MCF 10A (cell line): ENCODE measurements at regions of chr7 and their contacts with region 1.

Region 1: GRCh38 chr7:104923010-104923421 is 91.0 kb upstream of the KMT2E start:
- DNase-seq: peak; percentile 90
- H3K4me3 Mint-ChIP-seq: no peak overlapping the region
- H3K27ac Mint-ChIP-seq: no peak overlapping the region
- H3K4me1 Mint-ChIP-seq: no peaks in the 10 kb centered on the region
- H3K27me3 Mint-ChIP-seq: peaks cover 5% of the 10 kb centered on the region
- CTCF ChIP-seq: peak; percentile 89

Region 2: GRCh38 chr7:103447073-103447951 is 1475.7 kb before region 1 on chr7:
- CTCF ChIA-PET with region 1: interaction called, 3 read pairs
- POLR2A ChIA-PET with region 1: no interaction called
- intact Hi-C with region 1: loop called (anchors 5 kb)
- DNase-seq: peak; percentile 65
- H3K4me3 Mint-ChIP-seq: no peak overlapping the region
- H3K27ac Mint-ChIP-seq: no peak overlapping the region
- H3K4me1 Mint-ChIP-seq: no peaks in the 10 kb centered on the region
- H3K27me3 Mint-ChIP-seq: peaks cover 81% of the 10 kb centered on the region
- CTCF ChIP-seq: peak; percentile 65

Region 3: GRCh38 chr7:103752997-103753396 is 1170.0 kb before region 1 on chr7:
- CTCF ChIA-PET with region 1: no interaction called
- POLR2A ChIA-PET with region 1: no interaction called
- intact Hi-C with region 1: no loop called
- DNase-seq: no peak
- H3K4me3 Mint-ChIP-seq: no peak overlapping the region
- H3K27ac Mint-ChIP-seq: no peak overlapping the region
- H3K4me1 Mint-ChIP-seq: no peaks in the 10 kb centered on the region
- H3K27me3 Mint-ChIP-seq: peaks cover 28% of the 10 kb centered on the region
- CTCF ChIP-seq: peak; percentile 21

Region 4: DNA sequence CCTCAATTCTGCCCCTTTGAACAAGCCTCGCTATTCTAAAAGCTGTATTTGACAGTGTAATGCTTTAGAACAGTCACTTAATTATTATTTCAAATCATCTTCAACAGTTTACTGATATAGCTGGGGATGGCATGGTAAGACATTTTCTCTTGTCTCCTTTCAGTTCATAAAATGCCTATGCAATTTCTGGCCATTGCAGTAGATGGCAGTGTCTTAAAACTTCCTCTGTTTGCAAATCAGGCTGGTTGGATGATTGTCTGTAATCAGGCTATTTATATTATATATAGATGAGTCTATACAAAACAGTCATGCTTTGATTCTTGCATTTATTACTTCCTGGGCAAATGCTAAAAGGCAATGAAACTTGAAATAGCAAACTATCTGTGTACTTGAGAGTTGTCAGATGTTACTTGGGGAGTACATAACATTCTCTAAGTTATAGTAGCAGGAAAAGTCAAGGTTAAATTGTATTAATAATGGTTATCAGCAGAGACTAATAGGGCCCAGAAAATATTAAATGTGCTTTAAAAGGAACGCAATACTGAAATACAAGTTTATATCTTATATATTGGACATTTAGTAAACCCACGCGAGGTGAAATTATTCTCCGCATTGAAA is 650.1 kb before region 1 on chr7:
- CTCF ChIA-PET with region 1: interaction called, 12 read pairs
- POLR2A ChIA-PET with region 1: interaction called, 3 read pairs
- intact Hi-C with region 1: loop called (anchors 5 kb)
- DNase-seq: peak; percentile 50
- H3K4me3 Mint-ChIP-seq: no peak overlapping the region
- H3K27ac Mint-ChIP-seq: no peak overlapping the region
- H3K4me1 Mint-ChIP-seq: no peaks in the 10 kb centered on the region
- H3K27me3 Mint-ChIP-seq: peaks cover 50% of the 10 kb centered on the region
- CTCF ChIP-seq: peak; percentile 41

Region 5: GRCh38 chr7:104873346-104873849 is 49.6 kb before region 1 on chr7:
- CTCF ChIA-PET with region 1: no interaction called
- POLR2A ChIA-PET with region 1: no interaction called
- intact Hi-C with region 1: no loop called
- DNase-seq: no peak
- H3K4me3 Mint-ChIP-seq: no peak overlapping the region
- H3K27ac Mint-ChIP-seq: no peak overlapping the region
- H3K4me1 Mint-ChIP-seq: no peaks in the 10 kb centered on the region
- H3K27me3 Mint-ChIP-seq: peaks cover 18% of the 10 kb centered on the region
- CTCF ChIP-seq: no peak

Region 6: DNA sequence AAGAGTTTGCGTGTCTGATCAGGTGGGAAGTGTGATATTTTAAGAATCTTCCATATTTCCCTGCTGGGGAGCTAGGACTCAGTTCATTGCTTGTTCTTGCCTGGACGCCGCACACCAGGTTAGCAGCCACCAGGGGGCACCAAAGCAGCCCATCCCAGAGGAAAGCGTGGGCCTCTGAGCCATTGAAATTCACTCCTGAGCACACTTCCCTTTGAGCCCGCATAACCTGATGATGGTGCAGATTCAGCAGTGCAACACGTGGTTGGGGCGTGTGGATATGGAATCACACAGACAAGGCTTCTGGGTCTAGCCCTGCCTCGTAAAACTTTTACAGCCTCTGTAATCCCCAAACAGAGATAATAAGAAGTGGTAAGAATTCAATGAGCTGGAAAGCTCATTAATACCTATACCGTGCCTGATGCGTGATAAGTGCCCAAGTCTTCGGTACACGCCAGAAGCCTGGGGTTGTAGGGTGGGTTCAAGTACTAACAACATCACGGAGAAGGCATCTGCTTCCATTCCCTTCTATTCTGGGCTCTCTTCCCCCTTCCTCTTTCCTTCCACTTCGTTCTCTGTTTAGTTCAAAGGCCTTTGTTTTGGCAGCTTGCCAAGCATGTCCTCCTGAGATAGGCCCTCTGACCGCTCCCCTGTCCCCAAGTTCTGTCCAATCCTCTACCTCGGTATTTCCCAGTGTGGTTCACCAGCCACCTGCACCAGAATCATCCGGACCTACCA is 39.1 kb before region 1 on chr7:
- CTCF ChIA-PET with region 1: interaction called, 64 read pairs
- POLR2A ChIA-PET with region 1: interaction called, 4 read pairs
- intact Hi-C with region 1: loop called (anchors 1 kb)
- DNase-seq: peak; percentile 86
- H3K4me3 Mint-ChIP-seq: no peak overlapping the region
- H3K27ac Mint-ChIP-seq: no peak overlapping the region
- H3K4me1 Mint-ChIP-seq: no peaks in the 10 kb centered on the region
- H3K27me3 Mint-ChIP-seq: peaks cover 2% of the 10 kb centered on the region
- CTCF ChIP-seq: peak; percentile 86

Region 7: GRCh38 chr7:104983578-104984539 is 60.8 kb after region 1 on chr7:
- CTCF ChIA-PET with region 1: interaction called, 63 read pairs
- POLR2A ChIA-PET with region 1: interaction called, 5 read pairs
- intact Hi-C with region 1: loop called (anchors 1 kb)
- DNase-seq: peak; percentile 91
- H3K4me3 Mint-ChIP-seq: peak overlapping the region; percentile 94
- H3K27ac Mint-ChIP-seq: peak overlapping the region; percentile 100
- H3K4me1 Mint-ChIP-seq: peaks cover 25% of the 10 kb centered on the region
- H3K27me3 Mint-ChIP-seq: no peaks in the 10 kb centered on the region
- CTCF ChIP-seq: peak; percentile 45

Region 8: GRCh38 chr7:105336009-105336408 is 413.0 kb after region 1 on chr7:
- CTCF ChIA-PET with region 1: no interaction called
- POLR2A ChIA-PET with region 1: no interaction called
- intact Hi-C with region 1: loop called (anchors 5 kb)
- DNase-seq: no peak
- H3K4me3 Mint-ChIP-seq: no peak overlapping the region
- H3K27ac Mint-ChIP-seq: no peak overlapping the region
- H3K4me1 Mint-ChIP-seq: peaks cover 16% of the 10 kb centered on the region
- H3K27me3 Mint-ChIP-seq: no peaks in the 10 kb centered on the region
- CTCF ChIP-seq: peak; percentile 30

Region 9: DNA sequence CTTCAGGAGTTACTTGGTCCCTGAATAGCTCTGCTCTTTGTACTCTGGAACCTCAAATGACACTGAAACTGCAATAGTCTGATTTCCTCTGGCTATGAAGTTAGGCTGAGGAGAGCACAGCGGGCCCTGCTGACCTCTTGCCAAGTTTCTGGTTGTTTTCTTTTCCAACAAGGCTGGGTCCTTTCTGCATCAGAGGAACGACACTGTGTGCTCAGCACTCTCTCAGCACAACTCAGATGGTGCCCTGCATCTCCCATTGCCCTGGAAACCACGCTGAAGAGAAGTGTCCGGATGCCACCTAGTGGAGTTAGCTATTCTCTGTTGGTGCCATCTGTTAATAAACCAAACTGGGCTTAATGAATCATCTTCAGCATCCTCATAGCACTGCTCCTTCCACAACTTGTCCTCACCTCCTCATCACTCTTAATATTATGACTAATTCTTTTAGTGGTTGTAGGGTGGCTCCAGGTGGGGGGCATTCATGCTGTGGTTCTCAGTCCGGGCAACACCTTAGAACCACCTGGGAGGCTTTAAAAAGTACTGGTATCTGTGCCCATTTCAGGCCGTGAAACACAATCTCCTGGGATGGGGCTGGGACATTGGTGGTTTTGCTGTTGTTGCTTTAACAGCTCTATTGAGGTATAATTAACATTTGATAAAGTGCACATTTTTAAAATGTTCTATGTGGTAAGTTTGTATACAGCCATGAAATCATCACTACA is 666.5 kb after region 1 on chr7:
- CTCF ChIA-PET with region 1: interaction called, 5 read pairs
- POLR2A ChIA-PET with region 1: no interaction called
- intact Hi-C with region 1: loop called (anchors 1 kb)
- DNase-seq: peak; percentile 83
- H3K4me3 Mint-ChIP-seq: no peak overlapping the region
- H3K27ac Mint-ChIP-seq: no peak overlapping the region
- H3K4me1 Mint-ChIP-seq: no peaks in the 10 kb centered on the region
- H3K27me3 Mint-ChIP-seq: no peaks in the 10 kb centered on the region
- CTCF ChIP-seq: peak; percentile 58

Region 10: GRCh38 chr7:105769901-105770628 is 847.0 kb after region 1 on chr7:
- CTCF ChIA-PET with region 1: no interaction called
- POLR2A ChIA-PET with region 1: no interaction called
- intact Hi-C with region 1: no loop called
- DNase-seq: no peak
- H3K4me3 Mint-ChIP-seq: no peak overlapping the region
- H3K27ac Mint-ChIP-seq: no peak overlapping the region
- H3K4me1 Mint-ChIP-seq: no peaks in the 10 kb centered on the region
- H3K27me3 Mint-ChIP-seq: no peaks in the 10 kb centered on the region
- CTCF ChIP-seq: no peak